Activated CD4-positive, alpha-beta T cell treated with anti-CD3 and anti-CD28 coated beads for 36 hours (primary cell): ENCODE measurements at regions of chr14 and their contacts with region 1.

Region 1: DNA sequence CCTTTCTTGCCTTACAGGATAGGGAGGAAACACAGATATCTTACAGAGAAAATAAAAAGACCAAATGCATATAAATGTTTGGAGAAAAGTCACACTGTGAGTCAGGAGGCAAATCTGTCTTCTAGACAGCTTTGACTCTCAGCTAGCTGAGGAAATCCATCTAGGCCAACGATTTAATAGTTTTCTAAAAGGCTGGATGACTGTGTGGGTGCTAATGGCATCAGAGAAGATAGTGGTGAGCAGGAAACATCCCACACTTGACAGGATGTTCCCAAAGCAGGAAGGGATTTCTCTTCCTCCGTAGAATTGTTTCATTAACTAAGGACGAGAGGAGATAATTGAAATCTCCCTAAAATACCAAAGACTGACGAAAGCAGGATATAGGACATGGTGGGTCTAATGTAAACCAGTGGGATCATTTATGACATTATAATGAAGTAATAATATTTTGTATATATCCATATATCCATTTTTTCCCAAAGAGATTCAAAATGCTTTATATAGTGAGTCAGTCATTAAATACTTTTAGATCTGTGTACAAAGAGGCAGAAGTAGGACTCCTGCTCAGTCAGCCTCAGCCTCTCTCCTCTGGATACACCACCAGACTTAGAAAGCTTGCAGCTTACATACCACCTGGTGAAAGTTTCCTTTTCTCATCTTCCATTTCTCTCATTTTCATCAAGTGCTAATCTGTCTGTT is 44.3 kb upstream of the PSMA6 start:
- DNase-seq: no peak
- ATAC-seq: no peak
- H3K4me3 Mint-ChIP-seq: no peak overlapping the region
- H3K27ac Mint-ChIP-seq: peak overlapping the region; percentile 27
- H3K4me1 Mint-ChIP-seq: peaks cover 14% of the 10 kb centered on the region
- H3K27me3 Mint-ChIP-seq: no peaks in the 10 kb centered on the region

Region 2: GRCh38 chr14:33430414-33430813 is 1817.5 kb before region 1 on chr14:
- CTCF ChIA-PET with region 1: no interaction called
- POLR2A ChIA-PET with region 1: no interaction called
- intact Hi-C with region 1: no loop called
- DNase-seq: no peak
- ATAC-seq: no peak
- H3K4me3 Mint-ChIP-seq: no peak overlapping the region
- H3K27ac Mint-ChIP-seq: no peak overlapping the region
- H3K4me1 Mint-ChIP-seq: no peaks in the 10 kb centered on the region
- H3K27me3 Mint-ChIP-seq: no peaks in the 10 kb centered on the region

Region 3: DNA sequence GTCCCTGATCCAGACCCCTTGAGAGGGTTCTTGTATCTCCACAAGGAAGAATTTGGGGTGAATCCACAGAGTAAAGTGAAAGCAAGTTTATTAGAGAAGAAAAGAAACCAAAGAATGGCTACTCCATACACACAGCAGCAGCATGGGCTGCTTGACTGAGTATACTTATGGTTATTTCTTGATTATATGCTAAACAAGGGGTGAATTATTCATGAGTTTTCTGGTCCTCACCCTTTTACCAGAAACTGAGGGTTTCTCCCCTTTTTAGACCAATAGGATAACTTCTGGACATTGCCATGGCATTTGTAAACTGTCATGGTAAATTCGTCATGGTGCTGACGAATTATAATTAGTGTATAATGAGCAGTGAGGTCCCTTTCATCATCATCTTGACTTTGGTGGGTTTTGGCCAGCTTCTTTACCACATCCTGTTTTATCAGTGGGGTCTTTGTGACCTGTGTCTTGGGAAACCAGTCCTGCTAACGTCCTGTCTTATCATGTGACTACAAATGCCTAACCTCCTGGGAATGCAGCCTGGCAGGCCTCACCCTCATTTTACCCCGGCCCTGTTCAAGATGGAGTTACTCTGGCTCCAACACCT is 907.8 kb before region 1 on chr14:
- CTCF ChIA-PET with region 1: no interaction called
- POLR2A ChIA-PET with region 1: no interaction called
- intact Hi-C with region 1: no loop called
- DNase-seq: no peak
- ATAC-seq: no peak
- H3K4me3 Mint-ChIP-seq: no peak overlapping the region
- H3K27ac Mint-ChIP-seq: no peak overlapping the region
- H3K4me1 Mint-ChIP-seq: peaks cover 4% of the 10 kb centered on the region
- H3K27me3 Mint-ChIP-seq: peaks cover 3% of the 10 kb centered on the region

Region 4: GRCh38 chr14:35222872-35223466 is 25.0 kb before region 1 on chr14:
- CTCF ChIA-PET with region 1: interaction called, 3 read pairs
- POLR2A ChIA-PET with region 1: interaction called, 10 read pairs
- intact Hi-C with region 1: no loop called
- DNase-seq: no peak
- ATAC-seq: peak; percentile 55
- H3K4me3 Mint-ChIP-seq: no peak overlapping the region
- H3K27ac Mint-ChIP-seq: peak overlapping the region; percentile 57
- H3K4me1 Mint-ChIP-seq: peaks cover 29% of the 10 kb centered on the region
- H3K27me3 Mint-ChIP-seq: no peaks in the 10 kb centered on the region

Region 5: DNA sequence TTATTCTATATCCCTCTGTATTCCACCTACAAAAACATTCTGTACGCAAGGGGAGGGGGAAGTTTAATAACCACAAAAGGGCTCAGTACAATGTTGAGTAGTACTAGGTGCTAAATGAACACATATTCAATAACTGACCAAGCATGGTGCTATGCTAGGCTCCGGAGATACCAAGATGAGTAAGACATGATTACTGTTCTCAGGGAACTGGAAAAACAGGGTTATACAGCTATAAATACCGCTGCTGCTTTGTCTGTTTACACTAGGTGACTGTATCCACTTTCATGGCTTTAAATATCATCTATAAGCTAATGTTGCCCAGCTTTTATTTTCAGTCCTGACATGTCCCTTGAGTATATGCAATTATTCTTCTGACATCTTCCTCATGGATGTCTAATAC is 421.9 kb after region 1 on chr14:
- CTCF ChIA-PET with region 1: no interaction called
- POLR2A ChIA-PET with region 1: no interaction called
- intact Hi-C with region 1: loop called in 1 of 2 experiments (anchors 5 kb)
- DNase-seq: no peak
- ATAC-seq: no peak
- H3K4me3 Mint-ChIP-seq: no peak overlapping the region
- H3K27ac Mint-ChIP-seq: no peak overlapping the region
- H3K4me1 Mint-ChIP-seq: no peaks in the 10 kb centered on the region
- H3K27me3 Mint-ChIP-seq: no peaks in the 10 kb centered on the region

Region 6: DNA sequence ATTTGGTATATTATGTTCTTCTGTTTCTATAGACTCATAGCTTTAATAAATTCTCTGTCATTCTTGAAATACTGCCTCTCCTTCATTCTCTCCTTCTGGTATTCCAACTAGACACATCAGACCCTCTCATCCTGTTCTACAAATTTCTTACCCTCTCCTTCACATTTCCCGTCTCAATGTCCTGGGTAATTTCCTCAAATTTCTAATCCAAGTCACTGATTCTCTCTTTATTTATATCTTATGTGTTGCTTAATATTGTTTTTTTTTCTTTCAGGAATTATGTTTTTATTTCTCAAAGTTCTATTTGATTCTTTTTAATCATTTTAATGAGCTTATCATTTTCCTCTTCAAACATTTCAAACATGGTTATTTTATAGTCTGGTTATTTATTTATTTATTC is 467.2 kb after region 1 on chr14:
- CTCF ChIA-PET with region 1: no interaction called
- POLR2A ChIA-PET with region 1: no interaction called
- intact Hi-C with region 1: no loop called
- DNase-seq: no peak
- ATAC-seq: no peak
- H3K4me3 Mint-ChIP-seq: no peak overlapping the region
- H3K27ac Mint-ChIP-seq: no peak overlapping the region
- H3K4me1 Mint-ChIP-seq: no peaks in the 10 kb centered on the region
- H3K27me3 Mint-ChIP-seq: no peaks in the 10 kb centered on the region